ENCODE measurements at regions of chr11 and their contacts with region 1.

Region 1: GRCh38 chr11:3123761-3124733 is 41.1 kb downstream of the OSBPL5 start:
- DNase-seq: peak; percentile 63 to 79 (median 67)
- ATAC-seq: peak; percentile 57
- H3K4me3 ChIP-seq: no peak overlapping the region
- H3K4me1 ChIP-seq: peaks cover 23% of the 10 kb centered on the region
- CTCF ChIP-seq: no peak

Region 2: GRCh38 chr11:3169255-3170045 is 45.4 kb after region 1 on chr11:
- intact Hi-C with region 1: loop called in 1 of 2 experiments (anchors 10 kb)
- DNase-seq: no peak
- ATAC-seq: peak; percentile 28
- H3K4me3 ChIP-seq: no peak overlapping the region
- H3K4me1 ChIP-seq: peaks cover 20% of the 10 kb centered on the region
- CTCF ChIP-seq: no peak